PC-3 (cell line): ENCODE measurements at regions of chrX and their contacts with region 1.

Region 1: GRCh38 chrX:130994671-130995070 is 63.5 kb upstream of the ARHGAP36 start:
- DNase-seq: peak; percentile 40
- ATAC-seq: no peak
- H3K4me3 ChIP-seq: no peak overlapping the region
- H3K27ac ChIP-seq: no peak overlapping the region
- H3K4me1 ChIP-seq: no peaks in the 10 kb centered on the region
- H3K27me3 ChIP-seq: peaks cover 4% of the 10 kb centered on the region; the same call in 1 of the 2 replicates
- CTCF ChIP-seq: peak; percentile 76

Region 2: DNA sequence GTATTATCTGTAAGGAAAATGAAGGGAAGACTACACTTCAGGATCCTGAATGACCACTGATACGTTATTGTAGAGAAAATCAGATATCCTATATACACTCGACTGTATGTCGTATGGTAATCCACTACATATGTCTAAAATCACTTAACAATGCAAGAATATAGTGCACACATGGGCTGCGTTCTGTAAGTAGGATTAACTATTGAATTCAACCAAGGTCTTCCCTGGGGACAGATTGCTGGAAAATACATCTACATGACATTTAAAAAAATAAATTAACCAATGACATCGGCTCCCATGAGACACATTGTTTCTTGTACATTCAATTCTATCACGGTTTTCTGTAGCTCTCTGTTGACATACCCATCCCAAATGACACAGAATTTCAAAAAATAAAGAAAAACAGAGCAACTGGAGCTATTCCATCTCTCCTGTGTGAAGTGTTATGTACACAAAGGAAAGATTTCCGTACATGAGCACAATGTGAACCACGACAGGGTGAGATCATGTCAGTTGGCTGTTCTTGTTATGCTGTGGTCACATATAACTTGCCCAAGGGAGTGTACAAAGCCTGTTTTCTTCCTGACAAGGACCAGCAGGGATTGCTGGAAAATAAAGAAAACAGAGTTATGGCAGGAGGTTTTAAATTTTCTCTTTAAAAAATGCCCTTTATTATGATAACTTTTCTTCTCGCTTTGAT is 97.7 kb before region 1 on chrX:
- CTCF ChIA-PET with region 1: no interaction called
- POLR2A ChIA-PET with region 1: no interaction called
- intact Hi-C with region 1: no loop called
- DNase-seq: no peak
- ATAC-seq: no peak
- H3K4me3 ChIP-seq: no peak overlapping the region
- H3K27ac ChIP-seq: no peak overlapping the region
- H3K4me1 ChIP-seq: peaks cover 3% of the 10 kb centered on the region; the same call in 1 of the 2 replicates
- H3K27me3 ChIP-seq: no peaks in the 10 kb centered on the region
- CTCF ChIP-seq: no peak

Region 3: GRCh38 chrX:131068945-131069719 is 74.5 kb after region 1 on chrX:
- CTCF ChIA-PET with region 1: no interaction called
- POLR2A ChIA-PET with region 1: no interaction called
- intact Hi-C with region 1: no loop called
- DNase-seq: peak; percentile 28
- ATAC-seq: no peak
- H3K4me3 ChIP-seq: no peak overlapping the region
- H3K27ac ChIP-seq: no peak overlapping the region
- H3K4me1 ChIP-seq: no peaks in the 10 kb centered on the region
- H3K27me3 ChIP-seq: peaks cover 11% of the 10 kb centered on the region; the same call in 1 of the 2 replicates
- CTCF ChIP-seq: peak; percentile 51

Region 4: DNA sequence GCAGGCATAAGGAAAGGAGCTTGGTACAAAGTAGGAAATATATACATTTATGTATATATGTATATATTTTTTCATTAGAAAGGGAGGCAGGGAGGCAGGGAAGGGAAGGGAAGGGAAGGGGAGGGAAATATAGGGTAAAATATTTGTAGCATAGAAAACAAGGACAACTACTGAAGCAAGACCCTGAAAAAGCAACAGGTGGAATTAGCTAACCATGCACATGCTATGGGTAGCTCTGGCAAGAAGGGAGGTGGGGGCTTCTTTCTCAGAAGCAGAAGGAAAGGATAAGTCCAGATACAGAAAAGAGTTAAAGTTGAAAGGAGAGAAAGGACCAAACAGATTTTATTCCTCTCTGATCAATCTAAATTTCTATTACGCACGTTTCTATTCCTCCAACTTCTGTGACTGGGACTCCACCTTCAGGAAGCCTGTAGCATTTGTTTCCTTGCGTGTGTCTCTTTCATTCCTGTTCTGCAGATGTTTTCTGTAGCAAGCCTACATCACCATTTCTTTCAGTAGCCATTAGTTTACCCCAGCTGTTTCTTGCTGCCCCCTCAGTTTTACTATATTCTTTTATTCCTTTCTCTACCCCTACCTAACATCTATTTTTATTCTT is 632.1 kb after region 1 on chrX:
- CTCF ChIA-PET with region 1: no interaction called
- POLR2A ChIA-PET with region 1: no interaction called
- intact Hi-C with region 1: loop called (anchors 1 kb)
- DNase-seq: peak; percentile 32
- ATAC-seq: no peak
- H3K4me3 ChIP-seq: no peak overlapping the region
- H3K27ac ChIP-seq: no peak overlapping the region
- H3K4me1 ChIP-seq: no peaks in the 10 kb centered on the region
- H3K27me3 ChIP-seq: peaks cover 33% of the 10 kb centered on the region
- CTCF ChIP-seq: peak; percentile 58